Natural killer cell (primary cell): ENCODE measurements at regions of chr3 and their contacts with region 1.

Region 1: DNA sequence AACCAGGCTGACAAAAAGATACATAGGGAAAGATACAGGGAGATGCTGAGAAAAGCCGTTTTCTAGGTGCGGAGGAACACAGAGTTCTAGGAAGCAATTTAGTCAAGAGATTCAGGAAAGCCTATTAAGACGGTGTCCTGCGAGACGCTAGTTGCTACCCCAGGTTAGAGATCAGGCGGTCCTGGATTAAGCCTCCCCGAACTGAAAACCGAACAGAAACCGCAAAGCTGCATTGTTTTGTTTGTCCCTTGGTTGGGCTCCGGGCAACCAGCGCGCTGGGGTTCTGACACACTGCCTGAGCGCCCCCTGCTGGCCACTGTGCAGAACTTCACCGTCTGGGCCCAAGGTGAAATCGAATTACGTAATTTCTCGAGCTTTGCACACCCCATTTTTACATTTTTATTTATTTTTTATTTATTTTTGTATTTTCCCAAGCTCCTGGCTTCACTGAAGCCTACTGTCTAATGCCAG is 37.3 kb upstream of the NDUFB4 start:
- DNase-seq: peak; percentile 89 to 94
- ATAC-seq: peak; percentile 92 to 96 (median 95)
- H3K4me3 ChIP-seq: peak overlapping the region; percentile 17
- H3K4me3 Mint-ChIP-seq: peak overlapping the region; percentile 77
- H3K27ac ChIP-seq: no peak overlapping the region
- H3K27ac Mint-ChIP-seq: peak overlapping the region in 1 of 2 donors; percentile 49
- H3K4me1 ChIP-seq: peaks cover 10% of the 10 kb centered on the region
- H3K4me1 Mint-ChIP-seq: peaks cover 12 to 21% of the 10 kb centered on the region in 2 donors
- H3K27me3 ChIP-seq: no peaks in the 10 kb centered on the region
- H3K27me3 Mint-ChIP-seq: peaks cover 10% of the 10 kb centered on the region in 2 donors
- CTCF ChIP-seq: peak; percentile 96

Region 2: GRCh38 chr3:119463171-119464169 is 1095.3 kb before region 1 on chr3 and contains the start of gene TMEM39A:
- intact Hi-C with region 1: loop called (anchors 5 kb)
- DNase-seq: peak; percentile 100
- ATAC-seq: peak; percentile 89 to 96 (median 90)
- H3K4me3 ChIP-seq: peak within 1 kb of the TSS; percentile 67
- H3K4me3 Mint-ChIP-seq: peak within 1 kb of the TSS; percentile 91
- H3K27ac ChIP-seq: peak within 1 kb of the TSS; percentile 100
- H3K27ac Mint-ChIP-seq: peak within 1 kb of the TSS; percentile 96 to 99
- H3K4me1 ChIP-seq: peaks cover 20% of the 10 kb centered on the region
- H3K4me1 Mint-ChIP-seq: peaks cover 35 to 48% of the 10 kb centered on the region in 2 donors
- H3K27me3 ChIP-seq: no peaks in the 10 kb centered on the region
- H3K27me3 Mint-ChIP-seq: no peaks in the 10 kb centered on the region
- CTCF ChIP-seq: no peak
- total RNA-seq, gene TMEM39A: 64.2 to 76.5 (median 64.7) TPM

Region 3: DNA sequence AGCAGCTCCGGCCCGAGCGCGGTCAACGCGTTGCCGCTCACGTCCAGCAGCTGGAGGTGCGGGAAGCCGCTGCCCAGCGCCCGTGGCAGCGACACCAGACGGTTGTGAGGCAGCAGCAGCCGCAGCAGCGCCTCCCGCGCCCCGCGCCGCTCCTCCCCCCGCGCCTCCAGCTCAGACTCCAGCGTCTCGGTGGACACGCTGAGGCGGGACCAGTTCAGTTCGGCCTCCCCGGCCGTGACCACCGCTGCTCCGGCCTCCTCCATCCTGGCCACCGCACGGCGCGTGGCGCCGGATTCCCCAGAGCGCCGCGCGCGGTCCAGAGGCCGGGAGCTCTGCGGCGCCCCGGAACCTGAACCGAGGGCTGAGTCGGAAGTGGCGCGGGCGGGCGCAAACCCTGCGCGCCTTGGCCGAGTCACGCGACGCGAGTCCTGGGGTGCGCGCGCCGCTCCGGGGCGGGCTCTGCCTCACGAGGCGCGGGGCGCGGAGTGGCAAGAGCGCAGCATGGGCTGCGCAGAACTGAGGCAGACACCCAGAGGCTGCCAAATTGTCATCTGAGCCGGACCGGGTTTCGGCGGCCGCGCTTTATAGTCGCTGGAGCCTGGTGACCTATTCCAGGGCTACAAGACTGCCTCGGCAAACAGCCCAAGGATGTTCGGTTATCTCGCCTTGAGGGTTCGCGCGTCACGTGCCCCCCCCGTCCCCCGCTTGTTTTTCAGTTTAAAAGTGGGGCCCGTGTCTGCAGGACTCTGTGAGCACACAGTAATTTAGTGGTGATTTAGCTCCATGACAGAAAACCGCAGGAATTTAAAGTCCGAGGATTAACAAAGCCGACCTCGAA is 209.6 kb before region 1 on chr3 and contains the start of gene LRRC58:
- intact Hi-C with region 1: loop called (anchors 5 kb)
- DNase-seq: peak; percentile 90 to 95
- ATAC-seq: peak; percentile 93 to 97 (median 94)
- H3K4me3 ChIP-seq: peak within 1 kb of the TSS; percentile 97
- H3K4me3 Mint-ChIP-seq: peak within 1 kb of the TSS; percentile 91
- H3K27ac ChIP-seq: peak within 1 kb of the TSS; percentile 75
- H3K27ac Mint-ChIP-seq: peak within 1 kb of the TSS; percentile 80 to 87
- H3K4me1 ChIP-seq: peaks cover 13% of the 10 kb centered on the region
- H3K4me1 Mint-ChIP-seq: peaks cover 42 to 46% of the 10 kb centered on the region in 2 donors
- H3K27me3 ChIP-seq: no peaks in the 10 kb centered on the region
- H3K27me3 Mint-ChIP-seq: peaks cover 6 to 21% of the 10 kb centered on the region in 2 donors
- CTCF ChIP-seq: no peak
- total RNA-seq, gene LRRC58: 17.0 to 21.8 (median 18.2) TPM

Region 4: DNA sequence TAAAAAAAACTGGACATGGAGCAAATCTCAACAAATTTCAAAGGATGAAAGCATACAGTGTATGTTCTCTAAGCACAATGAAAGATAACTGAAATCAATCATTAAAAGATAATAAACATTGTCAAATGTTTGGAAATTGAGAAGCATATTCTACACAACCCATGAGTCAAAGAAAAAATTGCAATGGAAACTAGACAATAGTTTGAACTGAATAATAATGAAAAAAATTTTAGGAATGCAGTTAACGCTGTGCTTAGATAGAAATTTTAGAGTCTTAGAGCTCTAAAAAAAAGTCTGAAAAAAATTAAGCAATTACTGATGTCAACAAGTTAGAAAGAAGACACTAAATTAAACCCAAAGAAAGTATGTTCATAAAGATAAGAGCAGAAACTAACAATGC is 168.0 kb after region 1 on chr3:
- intact Hi-C with region 1: no loop called
- DNase-seq: no peak
- ATAC-seq: no peak
- H3K4me3 ChIP-seq: no peak overlapping the region
- H3K4me3 Mint-ChIP-seq: no peak overlapping the region
- H3K27ac ChIP-seq: no peak overlapping the region
- H3K27ac Mint-ChIP-seq: no peak overlapping the region
- H3K4me1 ChIP-seq: no peaks in the 10 kb centered on the region
- H3K4me1 Mint-ChIP-seq: no peaks in the 10 kb centered on the region
- H3K27me3 ChIP-seq: no peaks in the 10 kb centered on the region
- H3K27me3 Mint-ChIP-seq: no peaks in the 10 kb centered on the region
- CTCF ChIP-seq: no peak

Region 5: DNA sequence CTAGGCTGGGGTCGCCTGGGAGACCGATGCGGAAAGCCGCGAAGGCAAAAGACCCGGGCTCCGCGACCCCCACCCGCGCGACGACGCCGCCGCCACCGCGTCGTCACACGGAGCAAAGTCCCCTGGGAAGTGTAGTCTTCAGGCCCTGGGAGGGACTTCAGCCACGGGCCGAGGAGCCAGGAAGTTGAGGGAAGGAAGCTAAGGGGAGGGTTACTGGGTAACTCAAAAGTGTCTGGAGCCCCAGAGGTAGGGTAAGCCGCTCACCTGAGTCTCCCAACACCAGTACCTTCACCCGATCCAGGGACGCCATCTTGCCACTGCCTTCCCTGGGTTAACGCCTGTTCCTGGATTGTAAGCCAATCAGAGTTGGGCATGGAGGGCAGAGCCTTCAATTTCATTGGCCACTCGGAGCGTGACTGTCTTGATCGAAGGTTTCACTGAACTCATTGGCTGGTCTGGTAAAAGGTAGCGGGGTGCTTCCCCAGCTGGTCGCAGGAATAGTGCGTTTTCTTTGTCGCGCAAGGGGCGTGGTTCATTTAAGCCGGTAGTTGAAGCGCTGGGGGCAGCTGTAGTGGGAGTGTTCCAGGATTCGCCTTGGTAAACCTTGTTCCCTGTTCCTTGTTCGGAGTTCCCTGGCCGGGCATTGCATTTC is 183.5 kb after region 1 on chr3 and contains the starts of genes GTF2E1 and RABL3:
- intact Hi-C with region 1: loop called (anchors 2 kb)
- DNase-seq: peak; percentile 97 to 99
- ATAC-seq: peak; percentile 94 to 99 (median 96)
- H3K4me3 ChIP-seq: peak within 1 kb of the TSS; percentile 91
- H3K4me3 Mint-ChIP-seq: peak within 1 kb of the TSS; percentile 95
- H3K27ac ChIP-seq: peak within 1 kb of the TSS; percentile 100
- H3K27ac Mint-ChIP-seq: peak within 1 kb of the TSS; percentile 97 to 99
- H3K4me1 ChIP-seq: peaks cover 14% of the 10 kb centered on the region
- H3K4me1 Mint-ChIP-seq: peaks cover 34 to 41% of the 10 kb centered on the region in 2 donors
- H3K27me3 ChIP-seq: no peaks in the 10 kb centered on the region
- H3K27me3 Mint-ChIP-seq: no peaks in the 10 kb centered on the region
- CTCF ChIP-seq: no peak
- total RNA-seq, gene GTF2E1: 10.9 to 15.7 (median 12.7) TPM
- total RNA-seq, gene RABL3: 11.7 to 18.4 (median 16.7) TPM